Esophagus squamous epithelium (tissue), 5 donors: ENCODE measurements at regions of chr17 and their contacts with region 1.

Region 1: DNA sequence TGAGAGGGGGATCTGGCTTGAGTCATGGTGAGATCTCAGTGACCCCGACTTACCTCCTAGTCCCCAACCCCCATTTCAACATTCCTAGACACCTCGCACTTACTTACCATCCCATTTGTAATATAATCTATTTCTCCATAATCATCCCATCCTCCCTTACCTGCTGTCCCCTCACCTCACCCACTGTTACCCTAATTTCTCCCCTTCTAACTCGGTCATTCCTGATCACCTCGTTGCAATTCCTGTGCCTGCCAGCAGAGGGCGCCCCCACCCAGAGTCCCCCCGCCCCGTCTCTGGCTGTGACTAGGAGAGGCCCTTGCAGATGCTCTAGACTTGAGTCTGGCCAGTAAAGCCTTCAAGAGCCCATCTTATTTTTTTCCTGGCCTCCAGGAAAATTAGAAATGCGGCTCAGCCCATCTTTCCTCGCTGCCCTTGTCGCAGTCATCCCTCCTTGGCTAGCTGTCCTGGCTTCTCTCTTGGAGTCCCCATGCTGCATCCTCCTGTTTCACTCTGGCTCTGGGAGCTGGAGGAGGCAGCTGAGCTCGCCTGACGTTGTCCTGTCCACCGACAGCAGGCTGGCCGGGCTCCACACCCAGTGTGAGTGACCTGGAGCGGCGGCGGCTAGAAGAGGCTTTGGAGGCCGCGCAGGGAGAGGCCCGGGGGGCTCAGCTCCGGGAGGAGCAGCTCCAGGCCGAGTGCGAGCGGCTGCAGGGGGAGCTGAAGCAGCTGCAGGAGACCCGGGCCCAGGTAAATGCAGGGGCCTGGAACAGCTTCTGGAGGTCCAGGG is 5.0 kb downstream of the TBKBP1 start:
- DNase-seq: no peak
- H3K4me3 ChIP-seq: no peak overlapping the region
- H3K27ac ChIP-seq: no peak overlapping the region
- H3K4me1 ChIP-seq: peaks cover 0 to 43% (median 11%) of the 10 kb centered on the region in 3 donors
- H3K27me3 ChIP-seq: no peaks in the 10 kb centered on the region
- CTCF ChIP-seq: peak; percentile 73 to 98 (median 80)
- POLR2A ChIP-seq: no peak

Region 2: GRCh38 chr17:47413872-47414271 is 285.1 kb before region 1 on chr17:
- intact Hi-C with region 1: no loop called
- DNase-seq: no peak
- H3K4me3 ChIP-seq: no peak overlapping the region
- H3K27ac ChIP-seq: no peak overlapping the region
- H3K4me1 ChIP-seq: no peaks in the 10 kb centered on the region
- H3K27me3 ChIP-seq: no peaks in the 10 kb centered on the region
- CTCF ChIP-seq: no peak
- POLR2A ChIP-seq: no peak

Region 3: DNA sequence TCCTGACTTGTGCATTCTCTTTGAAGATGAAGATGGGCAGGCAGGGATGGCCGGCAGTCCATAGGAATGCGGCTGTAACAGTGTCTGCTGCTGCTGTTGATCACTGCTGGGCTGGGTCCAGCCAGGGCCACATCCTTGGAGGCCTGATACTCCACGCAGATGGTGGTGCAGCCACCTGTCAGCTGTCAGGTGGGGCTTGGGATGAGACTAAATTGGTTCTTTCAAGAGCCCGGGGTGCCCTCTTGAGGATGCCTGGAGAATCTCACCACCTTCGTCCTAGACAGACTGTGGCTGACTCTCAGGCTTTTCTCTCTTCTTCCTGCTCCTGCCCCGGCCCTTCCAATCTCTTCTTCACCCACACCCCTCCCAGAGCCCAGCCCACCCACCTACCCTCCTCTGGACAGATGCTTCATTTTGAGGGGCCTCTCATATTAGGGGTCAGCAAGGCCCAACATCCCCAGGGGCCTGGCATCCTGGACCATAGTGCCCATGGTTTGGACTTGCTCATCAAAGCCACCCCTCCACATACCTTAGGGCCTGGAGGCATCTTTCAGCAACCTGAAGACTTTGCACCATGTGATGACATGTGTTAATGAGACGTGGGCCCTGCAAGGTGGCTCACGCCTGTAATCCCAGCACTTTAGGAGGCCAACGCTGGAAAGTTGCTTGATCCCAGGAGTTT is 103.5 kb after region 1 on chr17:
- intact Hi-C with region 1: loop called (anchors 10 kb)
- DNase-seq: no peak
- H3K4me3 ChIP-seq: no peak overlapping the region
- H3K27ac ChIP-seq: no peak overlapping the region
- H3K4me1 ChIP-seq: no peaks in the 10 kb centered on the region
- H3K27me3 ChIP-seq: peaks cover 0 to 8% (median 0%) of the 10 kb centered on the region in 4 donors
- CTCF ChIP-seq: peak in 5 of 6 experiments; percentile 31 to 61 (median 34)
- POLR2A ChIP-seq: no peak